ENCODE measurements at regions of chr3 and their contacts with region 1.

Region 1: DNA sequence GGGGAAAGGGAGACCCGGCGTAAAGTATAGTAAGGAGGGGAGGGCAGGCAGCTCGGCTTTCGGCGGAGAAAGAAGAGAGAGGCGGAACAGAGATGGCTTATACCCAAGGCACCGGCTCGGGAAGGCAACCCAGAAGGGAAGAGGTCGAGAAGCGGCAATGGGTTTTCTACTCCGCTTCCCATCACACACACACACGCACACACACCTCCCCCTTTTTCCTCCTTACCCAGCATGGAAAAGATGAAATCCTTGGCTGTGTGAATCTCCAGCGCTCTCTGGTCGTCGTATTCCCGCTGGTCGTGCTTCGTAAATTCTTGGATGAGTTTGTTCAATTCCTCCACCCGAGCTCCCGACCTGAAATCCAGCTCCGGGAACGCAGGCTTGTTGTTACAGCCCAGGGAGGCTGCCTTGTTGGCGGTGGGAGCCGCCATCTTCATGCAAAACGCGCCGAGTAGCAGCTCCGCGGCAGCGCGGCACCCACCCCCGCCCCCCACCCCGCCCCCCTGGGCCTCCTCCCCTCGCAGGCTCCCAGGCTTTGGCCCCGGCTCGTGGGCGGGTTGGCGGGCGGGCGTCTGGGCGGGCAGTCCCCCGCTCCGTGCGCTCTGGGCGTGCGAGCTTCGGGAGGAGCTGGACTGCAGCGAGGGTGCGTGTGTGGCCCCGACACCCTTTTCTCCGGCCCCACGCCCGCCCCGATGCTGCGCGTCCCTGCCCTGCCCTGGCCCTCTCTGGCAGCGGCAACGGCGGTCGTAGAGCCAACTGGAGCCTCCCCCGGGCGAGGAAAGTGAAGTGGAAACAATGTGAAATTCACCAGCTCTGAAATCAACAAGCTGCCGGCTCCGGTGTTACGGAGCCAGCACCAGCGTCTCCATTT is at the start of gene MB21D2:
- DNase-seq: peak; percentile 58
- ATAC-seq: peak; percentile 32
- H3K4me3 Mint-ChIP-seq: peak within 1 kb of the TSS; percentile 100
- H3K27ac Mint-ChIP-seq: peak within 1 kb of the TSS; percentile 100
- H3K4me1 Mint-ChIP-seq: peaks cover 65% of the 10 kb centered on the region
- H3K27me3 Mint-ChIP-seq: peaks cover 2% of the 10 kb centered on the region; the same call in 1 of the 2 replicates
- CTCF ChIP-seq: no peak
- total RNA-seq, gene MB21D2: 14.0 to 19.7 TPM (median 15.5 TPM) in 3 replicates

Region 2: GRCh38 chr3:192879336-192880106 is 38.1 kb before region 1 on chr3:
- CTCF ChIA-PET with region 1: interaction called, 10 read pairs
- POLR2A ChIA-PET with region 1: interaction called, 8 read pairs
- DNase-seq: peak; percentile 53
- ATAC-seq: peak; percentile 92
- H3K4me3 Mint-ChIP-seq: peak overlapping the region; percentile 16; the same call in 1 of the 2 replicates
- H3K27ac Mint-ChIP-seq: peak overlapping the region; percentile 95
- H3K4me1 Mint-ChIP-seq: peaks cover 65% of the 10 kb centered on the region
- H3K27me3 Mint-ChIP-seq: no peaks in the 10 kb centered on the region
- CTCF ChIP-seq: no peak

Region 3: GRCh38 chr3:192887047-192887446 is 30.6 kb before region 1 on chr3:
- CTCF ChIA-PET with region 1: interaction called, 15 read pairs
- POLR2A ChIA-PET with region 1: interaction called, 9 read pairs
- DNase-seq: no peak
- ATAC-seq: no peak
- H3K4me3 Mint-ChIP-seq: no peak overlapping the region
- H3K27ac Mint-ChIP-seq: peak overlapping the region; percentile 87; the same call in 1 of the 2 replicates
- H3K4me1 Mint-ChIP-seq: peaks cover 86% of the 10 kb centered on the region
- H3K27me3 Mint-ChIP-seq: no peaks in the 10 kb centered on the region
- CTCF ChIP-seq: no peak

Region 4: DNA sequence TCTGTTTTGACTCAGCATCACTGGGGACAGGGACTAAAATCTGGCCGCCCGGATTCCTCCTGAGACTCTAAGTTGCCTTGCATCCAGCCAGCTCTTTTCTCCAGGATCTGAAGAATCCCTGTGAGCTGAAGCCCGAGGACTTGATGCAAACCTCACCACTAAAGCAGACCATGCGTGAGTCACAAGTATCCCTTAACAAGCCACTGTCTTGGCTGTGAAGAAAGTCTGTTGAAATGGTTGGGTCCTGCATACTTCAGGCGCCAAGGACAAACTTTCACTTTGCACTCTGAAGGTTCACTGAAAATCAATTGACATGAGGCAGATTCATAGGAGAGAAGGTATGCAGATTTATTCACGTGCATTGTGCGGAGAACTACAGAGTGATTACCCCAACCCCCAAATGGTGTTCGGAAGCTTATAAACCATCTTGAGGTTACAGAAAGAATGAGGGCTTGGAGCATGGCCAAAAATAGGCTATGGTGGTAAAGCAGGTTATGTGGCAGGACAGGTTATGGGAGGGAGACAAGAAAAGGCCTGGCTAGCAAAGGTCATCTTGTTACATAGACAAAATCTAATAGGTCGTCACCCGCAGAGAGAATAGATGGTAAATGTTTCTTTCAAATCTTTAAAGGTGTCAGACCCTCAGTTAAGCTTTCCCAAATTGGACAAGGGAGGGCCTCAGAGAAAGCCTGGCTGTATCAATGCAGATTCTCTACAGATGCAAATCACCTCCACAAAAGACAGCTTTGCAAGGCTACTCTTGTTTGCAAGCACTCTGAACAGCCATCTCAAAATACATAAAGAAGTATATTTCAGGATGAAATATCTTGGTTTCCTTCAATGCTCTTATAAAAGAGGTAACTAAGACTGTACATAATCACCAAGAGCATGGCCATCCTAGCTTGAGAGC is 197.0 kb after region 1 on chr3:
- CTCF ChIA-PET with region 1: no interaction called
- POLR2A ChIA-PET with region 1: no interaction called
- DNase-seq: no peak
- ATAC-seq: no peak
- H3K4me3 Mint-ChIP-seq: no peak overlapping the region
- H3K27ac Mint-ChIP-seq: no peak overlapping the region
- H3K4me1 Mint-ChIP-seq: peaks cover 38% of the 10 kb centered on the region
- H3K27me3 Mint-ChIP-seq: peaks cover 3% of the 10 kb centered on the region
- CTCF ChIP-seq: no peak